H1 (cell line): ENCODE measurements at regions of chr12 and their contacts with region 1.

Region 1: GRCh38 chr12:45728630-45729232 is 775 bp upstream of the ARID2 start:
- DNase-seq: peak; percentile 90 to 94
- H3K4me3 ChIP-seq: peak overlapping the region; percentile 62 to 93 (median 92)
- H3K27ac ChIP-seq: peak overlapping the region; percentile 44; the same call in 1 of the 2 replicates
- H3K4me1 ChIP-seq: no peaks in the 10 kb centered on the region; a peak in 1 of 7 replicates
- H3K27me3 ChIP-seq: no peaks in the 10 kb centered on the region
- CTCF ChIP-seq: peak; percentile 91 to 96 (median 93)
- EP300 ChIP-seq: peak; percentile 9 to 89; a peak in 2 of 3 replicates
- POLR2A ChIP-seq: peak; percentile 92
- RAD21 ChIP-seq: peak; percentile 38 to 67; a peak in 3 of 4 replicates

Region 2: GRCh38 chr12:45654002-45654665 is 74.6 kb before region 1 on chr12:
- CTCF ChIA-PET with region 1: no interaction called
- POLR2A ChIA-PET with region 1: no interaction called
- DNase-seq: no peak
- H3K4me3 ChIP-seq: no peak overlapping the region
- H3K27ac ChIP-seq: no peak overlapping the region
- H3K4me1 ChIP-seq: peaks cover 0 to 2% (median 0%) of the 10 kb centered on the region in 4 experiments; a peak in 1 of 7 replicates
- H3K27me3 ChIP-seq: no peaks in the 10 kb centered on the region
- CTCF ChIP-seq: no peak
- EP300 ChIP-seq: no peak
- POLR2A ChIP-seq: no peak
- RAD21 ChIP-seq: no peak

Region 3: GRCh38 chr12:45718306-45718705 is 10.4 kb before region 1 on chr12:
- CTCF ChIA-PET with region 1: interaction called, 21 read pairs
- POLR2A ChIA-PET with region 1: interaction called, 14 read pairs
- DNase-seq: no peak
- H3K4me3 ChIP-seq: no peak overlapping the region
- H3K27ac ChIP-seq: no peak overlapping the region
- H3K4me1 ChIP-seq: no peaks in the 10 kb centered on the region; a peak in 1 of 7 replicates
- H3K27me3 ChIP-seq: no peaks in the 10 kb centered on the region
- CTCF ChIP-seq: no peak
- EP300 ChIP-seq: no peak
- POLR2A ChIP-seq: no peak
- RAD21 ChIP-seq: no peak

Region 4: DNA sequence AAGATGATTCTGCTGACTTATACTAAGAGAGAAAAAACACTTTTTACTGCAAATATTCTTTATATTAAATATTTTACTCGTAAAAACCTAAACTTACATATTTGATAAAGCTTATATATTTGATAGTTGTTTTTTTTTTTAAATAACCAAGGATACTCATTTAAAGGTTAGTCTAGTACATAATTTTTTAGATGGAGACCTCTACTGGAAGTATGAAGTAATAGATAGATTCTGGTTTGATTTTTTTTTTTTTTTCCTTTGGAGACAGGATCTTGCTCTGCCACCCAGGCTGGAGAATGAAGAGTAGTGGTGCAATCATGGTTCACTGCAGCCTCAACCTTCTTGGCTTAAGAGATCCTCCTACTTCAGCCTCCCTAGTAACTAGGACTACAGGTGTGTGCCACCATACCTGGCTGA is 17.1 kb after region 1 on chr12:
- CTCF ChIA-PET with region 1: interaction called, 8 read pairs
- POLR2A ChIA-PET with region 1: interaction called, 13 read pairs
- DNase-seq: no peak
- H3K4me3 ChIP-seq: no peak overlapping the region
- H3K27ac ChIP-seq: no peak overlapping the region
- H3K4me1 ChIP-seq: no peaks in the 10 kb centered on the region
- H3K27me3 ChIP-seq: no peaks in the 10 kb centered on the region
- CTCF ChIP-seq: no peak
- EP300 ChIP-seq: no peak
- POLR2A ChIP-seq: no peak
- RAD21 ChIP-seq: no peak

Region 5: GRCh38 chr12:45762185-45763110 is 33.7 kb after region 1 on chr12:
- CTCF ChIA-PET with region 1: no interaction called
- POLR2A ChIA-PET with region 1: no interaction called
- DNase-seq: no peak
- H3K4me3 ChIP-seq: no peak overlapping the region
- H3K27ac ChIP-seq: no peak overlapping the region
- H3K4me1 ChIP-seq: peaks cover 0 to 3% (median 1%) of the 10 kb centered on the region in 4 experiments; a peak in 4 of 7 replicates
- H3K27me3 ChIP-seq: no peaks in the 10 kb centered on the region
- CTCF ChIP-seq: peak in 1 of 3 experiments; percentile 55; a peak in 2 of 4 replicates
- EP300 ChIP-seq: no peak
- POLR2A ChIP-seq: no peak
- RAD21 ChIP-seq: peak; percentile 48 to 50